Thyroid gland (tissue), 4 donors: ENCODE measurements at regions of chr5 and their contacts with region 1.

Region 1: DNA sequence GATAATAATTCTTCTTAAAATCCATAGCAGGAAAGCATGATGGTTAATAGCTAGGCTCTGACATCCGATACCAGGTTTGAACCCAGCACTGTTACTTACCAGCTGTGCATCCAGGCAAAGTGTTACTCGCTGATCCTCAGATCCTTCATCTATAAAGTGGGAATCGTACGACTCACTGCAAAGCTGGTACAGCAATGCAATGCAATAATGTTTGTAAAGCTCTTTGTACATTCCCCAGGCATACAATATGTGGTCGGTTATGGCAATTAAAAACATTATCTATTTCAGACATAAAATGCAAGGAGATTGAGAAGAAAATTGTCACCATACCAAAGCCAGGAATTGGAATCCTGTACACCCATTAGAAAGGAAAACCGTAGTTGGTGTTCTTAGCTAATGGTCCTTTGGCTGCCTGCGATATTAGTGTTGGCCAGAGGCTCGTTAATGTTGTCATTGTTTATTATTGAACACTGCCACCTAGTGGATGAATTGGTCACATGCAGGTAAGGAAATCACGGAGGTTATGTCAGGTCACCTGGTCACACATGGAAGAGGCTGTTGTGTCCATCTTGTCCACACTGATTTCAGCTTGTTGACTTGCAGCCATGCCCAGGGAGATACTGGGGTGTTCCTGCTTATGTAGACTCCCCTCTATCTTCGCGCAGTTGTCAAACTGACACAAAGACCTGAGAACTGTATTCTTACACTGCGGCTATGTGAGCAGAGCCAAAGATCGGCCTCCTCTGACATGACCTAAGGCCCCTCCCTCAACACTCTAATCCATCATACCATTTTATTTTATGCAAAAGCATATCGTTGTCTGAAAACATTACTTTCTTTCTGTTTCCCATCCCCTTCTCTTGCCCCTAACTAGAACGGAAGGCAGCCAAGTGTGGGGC is 87.5 kb upstream of the PPP2R2B start:
- DNase-seq: peak; percentile 63 to 67
- H3K4me3 ChIP-seq: no peak overlapping the region
- H3K27ac ChIP-seq: no peak overlapping the region
- H3K4me1 ChIP-seq: peaks cover 13 to 34% of the 10 kb centered on the region in 2 donors
- H3K27me3 ChIP-seq: no peaks in the 10 kb centered on the region
- CTCF ChIP-seq: peak; percentile 26 to 98 (median 91)
- POLR2A ChIP-seq: no peak

Region 2: GRCh38 chr5:146541958-146542849 is 423.8 kb before region 1 on chr5:
- intact Hi-C with region 1: loop called (anchors 5 kb)
- DNase-seq: peak; percentile 72 to 79
- H3K4me3 ChIP-seq: no peak overlapping the region
- H3K27ac ChIP-seq: no peak overlapping the region
- H3K4me1 ChIP-seq: no peaks in the 10 kb centered on the region
- H3K27me3 ChIP-seq: no peaks in the 10 kb centered on the region
- CTCF ChIP-seq: peak; percentile 56 to 89 (median 75)
- POLR2A ChIP-seq: no peak

Region 3: DNA sequence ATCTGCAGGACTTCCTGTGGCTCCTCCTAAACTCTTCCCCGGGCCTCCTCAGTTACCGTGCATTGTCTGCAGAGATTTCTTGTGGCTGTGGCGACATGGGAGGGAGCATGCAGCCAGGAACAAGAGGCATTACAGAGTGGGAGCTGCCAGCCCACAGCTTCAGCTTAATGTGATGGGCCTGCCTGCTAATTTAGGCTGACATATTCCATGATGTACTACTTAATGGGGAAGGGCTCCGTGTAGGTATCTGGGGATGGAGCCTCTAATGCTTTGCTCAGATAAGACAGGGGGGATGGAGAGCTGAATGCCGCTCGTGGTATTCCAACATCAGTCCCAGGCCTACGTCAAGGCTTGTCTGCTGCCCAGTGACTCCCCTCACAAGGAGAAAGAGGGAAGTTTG is 312.4 kb before region 1 on chr5:
- intact Hi-C with region 1: loop called (anchors 10 kb)
- DNase-seq: no peak
- H3K4me3 ChIP-seq: no peak overlapping the region
- H3K27ac ChIP-seq: no peak overlapping the region
- H3K4me1 ChIP-seq: no peaks in the 10 kb centered on the region
- H3K27me3 ChIP-seq: no peaks in the 10 kb centered on the region
- CTCF ChIP-seq: no peak
- POLR2A ChIP-seq: no peak

Region 4: DNA sequence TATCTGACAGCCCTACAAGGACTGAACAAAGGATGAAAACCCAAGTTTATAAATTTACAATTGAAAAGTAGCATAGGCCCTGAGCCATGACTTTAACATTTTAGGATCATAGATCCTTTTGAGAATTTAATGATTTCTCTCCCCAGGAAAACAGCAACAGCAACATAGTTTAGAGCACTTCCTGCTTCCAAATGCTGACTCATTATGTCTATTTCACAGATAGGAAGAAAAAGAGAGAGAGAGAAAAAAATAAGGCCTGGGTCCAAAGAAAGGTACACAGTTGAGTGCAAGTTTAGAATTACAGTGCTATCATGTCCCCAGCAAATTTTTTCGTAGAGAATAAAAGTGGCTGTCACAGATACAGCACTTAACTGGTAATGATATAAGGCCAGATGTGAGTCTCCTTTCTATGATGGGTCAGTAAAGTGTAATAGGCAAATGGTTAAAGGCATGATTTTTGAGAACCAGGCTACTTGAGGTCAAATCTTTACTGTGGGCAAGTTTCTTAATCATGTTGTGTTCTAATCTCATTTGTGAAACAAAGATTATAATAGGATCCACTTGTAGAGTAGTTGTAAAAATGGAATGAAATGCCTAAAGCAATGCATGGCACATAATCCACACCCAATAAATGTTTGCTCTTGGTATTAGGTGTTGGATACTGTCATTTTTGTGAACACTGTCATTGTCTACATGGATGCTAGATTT is 75.1 kb before region 1 on chr5:
- intact Hi-C with region 1: no loop called
- DNase-seq: no peak
- H3K4me3 ChIP-seq: no peak overlapping the region
- H3K27ac ChIP-seq: no peak overlapping the region
- H3K4me1 ChIP-seq: no peaks in the 10 kb centered on the region
- H3K27me3 ChIP-seq: no peaks in the 10 kb centered on the region
- CTCF ChIP-seq: no peak
- POLR2A ChIP-seq: no peak